SK-N-SH (cell line): ENCODE measurements at regions of chr14 and their contacts with region 1.

Region 1: DNA sequence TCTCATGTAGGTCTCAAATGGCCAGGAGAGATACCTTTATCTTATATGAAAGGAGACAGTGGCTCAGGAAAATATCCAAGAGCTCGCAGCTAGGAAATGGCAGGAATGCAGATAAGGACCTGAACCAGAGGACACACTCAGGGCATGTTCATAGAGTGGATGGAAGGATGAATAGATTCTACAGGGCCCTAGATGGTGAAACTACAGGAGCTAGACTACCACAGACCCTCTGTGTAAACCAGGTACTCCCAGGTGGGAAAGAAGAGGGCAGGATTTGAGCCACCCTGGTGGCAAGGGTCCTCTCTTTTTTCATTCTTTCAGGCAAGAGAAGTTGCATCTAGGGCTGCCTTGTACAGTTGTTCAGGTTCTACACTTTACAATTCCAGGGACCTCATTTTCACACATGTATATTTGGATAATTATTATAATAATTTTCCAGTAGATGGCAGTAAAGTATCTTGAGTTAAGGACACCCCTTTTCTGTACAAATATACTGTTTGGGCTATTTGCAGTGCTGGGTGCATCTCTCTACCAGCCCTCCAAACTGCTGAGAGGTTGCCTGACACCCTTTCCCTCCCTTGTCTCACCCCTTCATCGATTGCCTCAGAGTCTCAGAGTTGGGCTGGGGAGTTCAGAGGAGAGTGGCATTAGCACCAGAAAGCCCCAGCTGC is 10.5 kb upstream of the ZDHHC22 start:
- DNase-seq: peak; percentile 61
- H3K4me3 ChIP-seq: no peak overlapping the region
- H3K27ac ChIP-seq: no peak overlapping the region
- H3K4me1 ChIP-seq: peaks cover 0 to 6% of the 10 kb centered on the region in 2 experiments; a peak in 1 of 4 replicates
- H3K27me3 ChIP-seq: no peaks in the 10 kb centered on the region
- CTCF ChIP-seq: peak; percentile 54
- EP300 ChIP-seq: no peak
- RAD21 ChIP-seq: peak; percentile 75

Region 2: DNA sequence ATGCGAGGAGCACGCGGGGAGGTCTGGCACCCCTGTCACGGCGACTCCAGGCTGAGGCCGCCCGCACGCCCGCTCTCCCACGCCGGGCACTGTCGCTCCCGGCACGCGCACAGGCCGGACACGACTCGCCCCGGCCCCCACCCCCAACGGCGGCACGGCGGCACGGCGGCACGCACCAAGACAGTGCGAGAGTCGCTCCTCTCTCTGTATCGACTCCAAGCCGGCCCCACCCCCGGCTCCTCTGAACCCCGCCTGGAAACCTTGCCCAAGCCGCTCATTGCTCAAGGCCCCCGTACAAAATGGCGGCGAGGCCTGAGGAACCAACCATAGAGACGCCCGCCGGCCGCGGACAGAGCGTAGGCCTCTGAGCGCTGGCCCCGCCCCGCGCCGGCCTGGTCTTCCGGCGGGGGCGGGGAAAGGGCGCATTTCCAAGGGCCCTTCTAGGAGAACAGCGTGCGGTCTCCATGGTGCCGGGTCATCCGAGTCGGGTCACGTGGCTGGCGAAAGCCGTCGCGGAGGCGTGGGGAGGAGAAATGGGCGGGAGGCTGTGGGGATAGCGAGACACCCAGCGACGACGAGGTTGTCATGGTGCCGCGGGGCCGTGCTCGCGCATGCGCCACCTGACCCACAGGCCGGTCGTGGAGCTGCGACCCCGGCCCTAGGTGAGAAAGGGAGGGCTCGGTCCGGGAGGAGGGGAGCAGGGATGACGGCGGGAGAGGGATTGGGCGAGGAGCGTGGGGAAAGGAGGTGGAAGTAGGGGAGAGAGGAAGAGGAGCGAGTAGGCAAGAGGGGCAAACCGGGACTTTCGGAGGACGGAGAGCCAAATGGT is 54.1 kb before region 1 on chr14 and contains the start of gene CIPC:
- CTCF ChIA-PET with region 1: interaction called, 14 read pairs
- POLR2A ChIA-PET with region 1: no interaction called
- DNase-seq: peak; percentile 98
- H3K4me3 ChIP-seq: peak within 1 kb of the TSS; percentile 64 to 94
- H3K27ac ChIP-seq: peak within 1 kb of the TSS; percentile 88 to 90
- H3K4me1 ChIP-seq: peaks cover 11 to 16% of the 10 kb centered on the region in 2 experiments
- H3K27me3 ChIP-seq: no peaks in the 10 kb centered on the region
- CTCF ChIP-seq: no peak
- EP300 ChIP-seq: peak; percentile 43 to 67; a peak in 3 of 4 replicates
- RAD21 ChIP-seq: no peak
- polyA plus RNA-seq, gene CIPC: 6.5 and 9.6 TPM in 2 replicates

Region 3: DNA sequence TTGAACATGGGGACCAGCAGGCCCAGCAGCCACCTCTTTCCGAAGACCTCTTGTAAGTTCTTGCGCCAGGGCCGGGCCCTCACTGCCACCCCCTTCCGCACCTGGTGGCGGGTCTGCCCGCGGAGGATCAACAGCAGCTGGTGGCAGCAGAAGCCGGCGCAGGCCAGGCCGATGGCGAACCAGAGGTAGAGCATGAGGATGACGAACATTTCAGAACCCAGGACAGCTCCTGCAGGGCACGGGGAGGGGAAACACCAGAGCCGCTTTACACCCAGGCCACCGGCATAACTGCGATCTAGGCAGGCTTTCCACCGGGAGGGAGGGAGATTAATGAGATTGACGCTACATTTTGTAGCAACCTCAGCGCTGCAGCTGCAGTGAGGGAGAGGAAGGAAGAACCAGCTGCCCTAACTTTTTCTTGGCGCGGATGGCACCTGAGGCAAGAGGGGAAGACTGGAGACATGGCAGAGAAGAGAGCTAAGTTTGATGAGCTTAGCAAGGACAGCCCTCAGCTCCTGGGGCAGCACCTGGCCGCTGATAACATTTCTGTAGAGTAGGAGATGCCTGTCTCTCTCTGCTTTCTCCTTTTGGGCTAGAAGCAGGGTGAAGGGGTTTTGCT is 18.2 kb before region 1 on chr14:
- CTCF ChIA-PET with region 1: interaction called, 117 read pairs
- POLR2A ChIA-PET with region 1: no interaction called
- DNase-seq: no peak
- H3K4me3 ChIP-seq: no peak overlapping the region
- H3K27ac ChIP-seq: no peak overlapping the region
- H3K4me1 ChIP-seq: peaks cover 0 to 13% of the 10 kb centered on the region in 2 experiments; a peak in 1 of 4 replicates
- H3K27me3 ChIP-seq: 0 out of 2 replicates have a peak, but pooled peaks cover 6% of the 10 kb centered on the region
- CTCF ChIP-seq: no peak
- EP300 ChIP-seq: no peak
- RAD21 ChIP-seq: no peak

Region 4: DNA sequence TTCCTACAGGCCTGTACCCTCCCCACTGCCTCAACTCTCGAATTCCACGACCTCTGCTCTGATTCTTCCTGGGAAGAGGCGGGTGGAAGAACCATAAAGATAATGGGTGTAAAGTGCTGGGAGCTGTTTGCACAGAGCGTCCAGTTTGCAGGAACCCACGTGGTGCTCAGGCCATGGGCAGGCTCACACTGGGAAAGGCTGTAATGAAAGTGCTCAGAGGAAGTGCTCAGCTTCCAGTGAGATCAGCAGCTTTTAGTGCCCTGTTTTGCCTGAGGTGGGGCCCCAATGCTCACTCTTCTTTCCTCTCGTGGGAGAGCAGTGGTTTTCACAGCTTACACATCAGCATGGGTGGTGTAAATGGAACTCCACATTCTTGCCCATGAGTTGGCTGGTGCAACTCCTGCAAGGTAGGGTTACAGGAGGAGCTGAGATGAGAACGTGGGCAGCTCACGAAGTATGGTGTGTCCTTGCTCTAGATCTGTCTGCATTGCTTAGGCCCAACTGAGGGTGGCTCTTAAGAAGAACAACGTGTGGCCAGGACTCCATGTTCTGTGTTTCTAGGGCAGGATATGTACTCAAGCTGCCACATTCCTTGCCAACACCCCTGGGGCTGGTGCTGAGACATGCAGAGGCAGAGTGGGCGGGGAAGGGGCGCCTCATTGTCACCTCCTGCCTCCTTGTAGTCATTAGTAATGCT is 32.5 kb after region 1 on chr14:
- CTCF ChIA-PET with region 1: interaction called, 13 read pairs
- POLR2A ChIA-PET with region 1: interaction called, 3 read pairs
- DNase-seq: no peak
- H3K4me3 ChIP-seq: no peak overlapping the region
- H3K27ac ChIP-seq: no peak overlapping the region
- H3K4me1 ChIP-seq: peaks cover 7 to 19% of the 10 kb centered on the region in 2 experiments; a peak in 2 of 4 replicates
- H3K27me3 ChIP-seq: peaks cover 3% of the 10 kb centered on the region; the same call in 1 of the 2 replicates
- CTCF ChIP-seq: no peak
- EP300 ChIP-seq: no peak
- RAD21 ChIP-seq: no peak

Region 5: DNA sequence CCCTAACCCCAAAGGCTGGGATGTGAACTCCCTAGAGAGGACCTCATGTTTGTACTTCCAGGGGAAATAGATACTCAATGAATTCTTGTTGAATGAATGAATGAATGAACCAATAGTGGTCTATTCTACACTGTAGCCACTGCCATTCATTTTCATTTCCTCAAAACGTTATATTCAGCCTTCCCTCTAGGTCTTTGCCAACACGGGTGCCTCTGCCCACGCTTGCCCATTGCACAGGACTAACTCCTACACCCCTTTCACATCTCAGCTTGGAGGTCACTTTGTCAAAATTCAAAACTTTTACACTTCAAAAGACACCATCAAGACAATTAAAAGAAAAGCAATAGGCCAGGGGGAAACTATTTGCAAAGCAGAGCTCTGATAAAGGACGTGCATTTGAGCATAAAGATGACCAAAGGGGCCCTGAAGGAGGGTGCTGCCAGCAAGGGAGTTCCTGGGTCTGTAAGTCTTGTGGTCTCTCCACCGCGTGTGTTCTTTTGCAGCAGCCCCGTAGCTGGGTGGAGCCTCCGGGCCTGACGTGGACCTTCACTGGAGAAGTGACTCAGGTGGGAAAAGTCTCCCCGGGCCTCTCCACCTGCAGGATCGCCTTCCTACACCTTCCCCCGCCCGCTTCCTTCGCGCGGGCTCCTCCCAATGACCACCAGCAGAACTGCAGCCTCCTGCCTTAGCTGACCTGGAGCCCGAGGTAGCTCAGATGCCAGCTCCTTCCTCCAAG is 61.1 kb after region 1 on chr14:
- CTCF ChIA-PET with region 1: interaction called, 153 read pairs
- POLR2A ChIA-PET with region 1: no interaction called
- DNase-seq: peak; percentile 82
- H3K4me3 ChIP-seq: peak overlapping the region in 1 of 2 experiments; percentile 16; a peak in 1 of 4 replicates
- H3K27ac ChIP-seq: no peak overlapping the region
- H3K4me1 ChIP-seq: peaks cover 0 to 3% of the 10 kb centered on the region in 2 experiments; a peak in 1 of 4 replicates
- H3K27me3 ChIP-seq: no peaks in the 10 kb centered on the region
- CTCF ChIP-seq: peak; percentile 61
- EP300 ChIP-seq: no peak
- RAD21 ChIP-seq: peak; percentile 77

Region 6: DNA sequence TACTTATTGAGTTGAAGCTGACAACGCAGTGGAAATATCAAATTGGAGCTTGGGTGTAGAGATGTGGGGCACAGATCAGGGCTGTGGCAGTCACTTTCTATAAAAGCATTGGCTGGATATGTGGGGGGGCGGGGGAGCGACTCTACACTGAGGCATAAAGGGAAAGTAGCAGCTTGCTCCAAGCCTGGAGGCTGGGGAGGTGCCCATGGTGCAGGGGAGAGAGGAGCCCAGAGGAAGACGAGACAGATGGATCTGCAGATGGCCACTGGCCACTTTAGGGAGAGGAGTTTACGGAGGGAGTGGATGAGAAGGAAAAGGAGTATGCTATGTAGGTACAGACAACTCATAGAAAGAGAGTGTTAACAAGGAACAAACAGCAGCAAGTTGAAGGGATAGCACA is 132.4 kb after region 1 on chr14:
- CTCF ChIA-PET with region 1: interaction called, 11 read pairs
- POLR2A ChIA-PET with region 1: no interaction called
- DNase-seq: no peak
- H3K4me3 ChIP-seq: no peak overlapping the region
- H3K27ac ChIP-seq: no peak overlapping the region
- H3K4me1 ChIP-seq: no peaks in the 10 kb centered on the region
- H3K27me3 ChIP-seq: no peaks in the 10 kb centered on the region
- CTCF ChIP-seq: no peak
- EP300 ChIP-seq: no peak
- RAD21 ChIP-seq: no peak

Region 7: GRCh38 chr14:77314043-77314442 is 162.0 kb after region 1 on chr14:
- CTCF ChIA-PET with region 1: interaction called, 133 read pairs
- POLR2A ChIA-PET with region 1: no interaction called
- DNase-seq: no peak
- H3K4me3 ChIP-seq: no peak overlapping the region
- H3K27ac ChIP-seq: peak overlapping the region in 1 of 2 experiments; percentile 36; a peak in 1 of 4 replicates
- H3K4me1 ChIP-seq: peaks cover 7 to 18% of the 10 kb centered on the region in 2 experiments; a peak in 3 of 4 replicates
- H3K27me3 ChIP-seq: no peaks in the 10 kb centered on the region
- CTCF ChIP-seq: no peak
- EP300 ChIP-seq: no peak
- RAD21 ChIP-seq: no peak